H1 (cell line): ENCODE measurements at regions of chr13 and their contacts with region 1.

Region 1: DNA sequence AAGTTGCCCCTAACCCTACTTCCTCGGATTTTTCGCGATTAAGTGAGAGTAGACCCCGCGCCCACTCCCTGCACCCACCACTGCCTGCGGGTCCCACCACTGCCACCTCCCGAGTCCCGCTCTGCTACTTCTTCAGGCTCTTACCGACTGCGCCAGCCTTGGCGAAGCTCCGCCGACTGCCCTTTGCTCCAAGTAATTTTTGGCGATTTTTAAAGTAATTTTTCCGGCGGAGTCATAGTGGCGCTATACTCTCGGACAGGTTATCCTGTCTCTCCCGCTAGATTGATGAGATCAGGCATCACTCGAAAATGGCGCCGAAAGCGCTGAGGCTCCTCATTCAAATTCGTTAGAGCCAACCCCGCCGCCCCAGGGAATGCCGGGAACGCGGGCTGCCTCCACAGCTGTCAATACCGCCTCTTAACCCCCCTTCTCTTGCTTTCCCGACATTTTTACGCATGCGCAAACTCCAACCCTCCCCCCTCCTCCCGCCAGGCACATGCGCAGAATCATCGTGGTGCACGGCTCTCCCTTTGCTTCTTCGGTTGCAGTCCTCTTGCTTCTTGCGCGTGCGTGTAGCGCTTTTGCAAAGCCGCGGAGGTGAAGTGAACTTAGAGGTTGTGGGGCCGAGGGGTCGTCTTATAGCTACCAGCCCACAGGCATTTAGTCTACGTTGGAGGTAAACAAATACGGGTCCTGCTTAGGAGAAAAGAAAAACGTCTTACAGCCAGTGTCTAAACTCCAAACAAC is 66.6 kb downstream of the KCNRG start:
- DNase-seq: peak; percentile 98 to 99
- H3K4me3 ChIP-seq: peak overlapping the region; percentile 66 to 85 (median 69)
- H3K27ac ChIP-seq: peak overlapping the region; percentile 75; the same call in 1 of the 2 replicates
- H3K4me1 ChIP-seq: peaks cover 0 to 8% (median 3%) of the 10 kb centered on the region in 4 experiments; a peak in 3 of 7 replicates
- H3K27me3 ChIP-seq: no peaks in the 10 kb centered on the region; a peak in 2 of 7 replicates
- CTCF ChIP-seq: peak in 1 of 3 experiments; percentile 15; a peak in 1 of 4 replicates
- EP300 ChIP-seq: no peak
- POLR2A ChIP-seq: peak in 1 of 2 experiments; percentile 15; a peak in 1 of 3 replicates
- RAD21 ChIP-seq: no peak

Region 2: DNA sequence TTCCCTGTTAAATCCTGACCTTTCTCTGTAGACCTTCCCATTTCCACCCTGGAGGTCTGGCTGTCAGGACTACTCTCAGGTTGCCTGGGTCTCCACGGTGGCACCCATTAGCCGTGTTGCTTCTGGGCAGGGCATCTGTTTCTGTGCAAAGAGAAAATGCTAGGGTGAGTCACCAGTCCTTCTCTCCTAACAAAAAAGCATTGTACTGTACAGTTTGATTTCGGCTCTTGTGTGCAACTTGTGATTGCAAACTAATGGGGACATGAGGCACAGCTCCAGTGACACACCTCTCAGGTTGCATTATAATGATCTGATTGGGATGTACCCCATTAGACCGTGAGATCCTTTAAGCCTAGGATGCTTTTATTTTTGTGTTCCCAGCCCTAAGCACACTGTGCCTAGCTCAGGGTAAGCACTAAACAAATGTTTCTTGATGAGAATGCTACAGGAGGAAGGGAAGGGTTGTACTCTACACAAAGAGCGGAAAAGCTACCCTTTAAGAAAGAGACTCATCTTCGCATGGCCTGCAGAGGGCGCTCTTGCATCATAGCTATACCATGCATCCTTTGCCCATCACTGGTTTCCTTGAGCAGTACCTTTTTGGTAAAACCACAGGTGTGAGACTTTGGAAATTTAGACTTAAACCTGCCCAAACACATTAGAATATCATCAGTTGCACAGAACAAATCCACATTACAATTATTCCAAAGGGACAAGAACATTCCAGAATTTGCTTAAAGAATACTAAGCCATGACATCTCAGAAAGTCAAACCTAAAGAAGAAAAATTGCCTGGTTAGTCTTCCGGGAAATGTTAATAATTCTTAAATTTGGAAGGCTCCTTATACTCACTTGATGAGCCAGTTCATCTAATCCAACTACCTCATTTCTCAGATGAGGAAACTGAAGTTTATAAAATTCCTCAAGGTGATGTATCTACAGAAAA is 105.3 kb before region 1 on chr13:
- CTCF ChIA-PET with region 1: interaction called, 25 read pairs
- POLR2A ChIA-PET with region 1: interaction called, 3 read pairs
- DNase-seq: peak in 1 of 2 experiments; percentile 75
- H3K4me3 ChIP-seq: no peak overlapping the region
- H3K27ac ChIP-seq: no peak overlapping the region
- H3K4me1 ChIP-seq: no peaks in the 10 kb centered on the region
- H3K27me3 ChIP-seq: no peaks in the 10 kb centered on the region
- CTCF ChIP-seq: peak; percentile 19 to 96 (median 82)
- EP300 ChIP-seq: no peak
- POLR2A ChIP-seq: no peak
- RAD21 ChIP-seq: peak; percentile 97 to 98

Region 3: GRCh38 chr13:50069261-50069660 is 12.6 kb before region 1 on chr13:
- CTCF ChIA-PET with region 1: interaction called, 12 read pairs
- POLR2A ChIA-PET with region 1: interaction called, 7 read pairs
- DNase-seq: no peak
- H3K4me3 ChIP-seq: no peak overlapping the region
- H3K27ac ChIP-seq: no peak overlapping the region
- H3K4me1 ChIP-seq: no peaks in the 10 kb centered on the region
- H3K27me3 ChIP-seq: no peaks in the 10 kb centered on the region
- CTCF ChIP-seq: no peak
- EP300 ChIP-seq: no peak
- POLR2A ChIP-seq: no peak
- RAD21 ChIP-seq: no peak

Region 4: GRCh38 chr13:50094615-50095293 is 12.9 kb after region 1 on chr13:
- CTCF ChIA-PET with region 1: interaction called, 29 read pairs
- POLR2A ChIA-PET with region 1: interaction called, 7 read pairs
- DNase-seq: no peak
- H3K4me3 ChIP-seq: no peak overlapping the region
- H3K27ac ChIP-seq: no peak overlapping the region
- H3K4me1 ChIP-seq: no peaks in the 10 kb centered on the region
- H3K27me3 ChIP-seq: no peaks in the 10 kb centered on the region
- CTCF ChIP-seq: no peak
- EP300 ChIP-seq: no peak
- POLR2A ChIP-seq: no peak
- RAD21 ChIP-seq: no peak

Region 5: DNA sequence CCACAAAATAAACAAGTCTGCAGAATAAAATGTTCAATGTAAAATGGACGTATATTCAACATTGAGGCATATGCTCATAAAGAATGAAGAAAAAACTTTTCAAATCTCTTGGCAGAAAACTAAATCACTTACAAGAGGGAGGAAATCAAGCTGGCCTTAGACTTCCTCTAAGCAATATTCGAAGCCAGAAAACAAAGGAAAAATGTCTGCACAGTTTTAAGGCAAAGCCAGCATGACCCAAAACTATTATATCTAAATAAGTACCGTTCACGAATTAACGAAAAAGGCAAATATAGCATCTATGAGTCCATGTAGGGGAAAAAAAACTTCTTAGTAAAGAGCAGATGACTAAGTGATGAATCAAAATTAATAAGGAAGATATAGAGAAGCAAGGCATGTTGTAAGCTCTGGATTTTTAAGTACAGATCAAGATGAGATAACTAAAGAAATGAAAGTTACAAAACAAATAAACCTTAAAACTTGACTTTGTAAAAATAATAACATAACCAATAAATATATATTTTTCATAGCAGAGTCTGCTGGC is 34.6 kb after region 1 on chr13:
- CTCF ChIA-PET with region 1: interaction called, 10 read pairs
- POLR2A ChIA-PET with region 1: interaction called, 3 read pairs
- DNase-seq: no peak
- H3K4me3 ChIP-seq: no peak overlapping the region
- H3K27ac ChIP-seq: no peak overlapping the region
- H3K4me1 ChIP-seq: no peaks in the 10 kb centered on the region
- H3K27me3 ChIP-seq: peaks cover 2 to 9% (median 8%) of the 10 kb centered on the region in 4 experiments
- CTCF ChIP-seq: no peak
- EP300 ChIP-seq: no peak
- POLR2A ChIP-seq: no peak
- RAD21 ChIP-seq: no peak

Region 6: DNA sequence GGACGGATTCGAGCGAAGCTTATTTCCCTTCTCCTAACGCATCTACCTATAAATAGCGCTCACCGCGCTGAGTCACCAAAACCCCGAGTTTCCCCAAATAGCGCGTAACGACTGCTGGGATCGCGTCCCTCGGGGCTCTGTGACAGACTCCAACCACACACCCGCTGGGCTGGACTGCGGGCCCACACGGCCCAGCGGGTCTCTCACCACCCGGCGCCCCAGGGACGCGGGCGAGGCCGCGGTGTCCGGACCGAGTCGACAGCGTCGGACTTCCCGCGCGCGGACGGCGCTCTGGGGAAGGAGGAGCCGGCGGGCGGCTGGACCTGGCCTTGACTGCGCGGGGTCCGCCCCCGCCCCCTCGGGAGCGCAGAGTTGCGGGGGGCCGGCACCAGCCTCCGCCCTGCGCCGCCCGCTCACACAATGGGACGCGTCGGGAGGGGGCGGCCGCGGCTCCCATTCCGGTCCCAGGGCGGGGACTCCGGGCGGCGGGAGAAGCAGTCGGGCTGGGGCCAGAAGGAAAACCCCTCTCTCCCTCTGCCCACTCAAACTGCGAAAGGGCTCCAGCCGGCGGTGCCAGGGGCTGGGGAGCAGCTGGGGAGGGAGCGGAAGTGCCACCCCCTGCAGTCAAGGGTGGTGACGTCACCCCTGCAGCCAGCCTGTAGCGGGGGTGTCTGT is 42.1 kb after region 1 on chr13:
- CTCF ChIA-PET with region 1: interaction called, 13 read pairs
- POLR2A ChIA-PET with region 1: interaction called, 18 read pairs
- DNase-seq: peak; percentile 78 to 87
- H3K4me3 ChIP-seq: peak overlapping the region; percentile 70 to 85 (median 72)
- H3K27ac ChIP-seq: no peak overlapping the region
- H3K4me1 ChIP-seq: peaks cover 5 to 30% (median 23%) of the 10 kb centered on the region in 4 experiments
- H3K27me3 ChIP-seq: peaks cover 38 to 66% (median 63%) of the 10 kb centered on the region in 4 experiments
- CTCF ChIP-seq: no peak
- EP300 ChIP-seq: 0 out of 3 replicates have a peak, but pooled peaks of 1 of the 2 experiments have one; percentile 12
- POLR2A ChIP-seq: no peak
- RAD21 ChIP-seq: no peak

Region 7: GRCh38 chr13:50130123-50130946 is 48.5 kb after region 1 on chr13:
- CTCF ChIA-PET with region 1: interaction called, 13 read pairs
- POLR2A ChIA-PET with region 1: interaction called, 18 read pairs
- DNase-seq: peak in 1 of 2 experiments; percentile 77
- H3K4me3 ChIP-seq: peak overlapping the region; percentile 34 to 85 (median 40); a peak in 7 of 8 replicates
- H3K27ac ChIP-seq: no peak overlapping the region
- H3K4me1 ChIP-seq: peaks cover 8 to 45% (median 26%) of the 10 kb centered on the region in 4 experiments
- H3K27me3 ChIP-seq: peaks cover 72 to 98% (median 91%) of the 10 kb centered on the region in 4 experiments
- CTCF ChIP-seq: no peak
- EP300 ChIP-seq: no peak
- POLR2A ChIP-seq: no peak
- RAD21 ChIP-seq: no peak